Mammary epithelial cell (primary cell): ENCODE measurements at regions of chr18 and their contacts with region 1.

Region 1: DNA sequence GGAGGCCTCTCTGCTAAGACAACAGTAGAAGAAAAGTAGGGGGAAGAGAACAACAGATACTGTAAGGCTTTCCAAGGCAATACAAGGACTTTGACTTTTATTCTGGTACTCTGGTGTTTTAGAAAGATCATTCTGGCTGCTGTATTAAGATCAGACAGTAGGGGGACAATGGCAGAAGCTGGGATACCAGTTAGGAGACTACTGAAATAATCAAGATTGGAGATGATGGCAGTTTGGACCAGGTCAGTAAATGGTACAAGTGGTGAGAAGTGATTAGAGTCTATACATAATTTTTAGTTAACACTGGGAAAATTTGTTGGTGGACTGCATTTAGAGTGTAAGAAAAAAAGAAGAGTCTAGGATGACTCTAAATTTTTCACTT is 139.7 kb downstream of the ROCK1 start:
- DNase-seq: peak; percentile 17
- H3K4me3 ChIP-seq: no peak overlapping the region
- H3K27ac ChIP-seq: no peak overlapping the region
- H3K4me1 ChIP-seq: no peaks in the 10 kb centered on the region
- H3K27me3 ChIP-seq: no peaks in the 10 kb centered on the region
- CTCF ChIP-seq: peak; percentile 57 to 60

Region 2: GRCh38 chr18:21134898-21135297 is 163.0 kb after region 1 on chr18:
- CTCF ChIA-PET with region 1: no interaction called
- dilution Hi-C with region 1: no loop called
- in situ Hi-C with region 1: no loop called
- intact Hi-C with region 1: loop called (anchors 1 kb)
- DNase-seq: peak; percentile 20
- H3K4me3 ChIP-seq: no peak overlapping the region
- H3K27ac ChIP-seq: no peak overlapping the region
- H3K4me1 ChIP-seq: no peaks in the 10 kb centered on the region
- H3K27me3 ChIP-seq: no peaks in the 10 kb centered on the region
- CTCF ChIP-seq: peak; percentile 13 to 47

Region 3: DNA sequence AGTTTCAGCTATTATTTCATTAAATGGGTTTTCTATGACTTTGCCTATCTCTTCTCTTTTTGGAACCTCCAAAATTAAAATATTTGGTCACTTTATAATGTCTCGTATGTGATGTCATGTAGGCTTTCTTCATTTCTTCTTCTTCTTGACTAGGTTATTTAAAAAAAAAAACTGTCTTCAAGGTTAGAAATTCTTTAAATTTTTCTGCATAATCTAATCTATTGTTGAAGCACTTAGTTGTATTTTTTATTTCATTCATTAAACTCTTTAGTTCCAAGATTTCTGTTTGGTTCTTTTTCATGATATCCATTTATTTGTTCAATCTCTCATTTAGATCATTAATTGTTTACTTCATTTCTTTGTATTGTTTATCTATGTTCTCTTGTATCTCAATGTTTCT is 183.6 kb after region 1 on chr18:
- CTCF ChIA-PET with region 1: no interaction called
- dilution Hi-C with region 1: no loop called
- in situ Hi-C with region 1: loop called in 1 of 2 experiments (anchors 10 kb)
- intact Hi-C with region 1: no loop called
- DNase-seq: no peak
- H3K4me3 ChIP-seq: no peak overlapping the region
- H3K27ac ChIP-seq: no peak overlapping the region
- H3K4me1 ChIP-seq: no peaks in the 10 kb centered on the region
- H3K27me3 ChIP-seq: no peaks in the 10 kb centered on the region
- CTCF ChIP-seq: no peak

Region 4: GRCh38 chr18:21203096-21203495 is 231.2 kb after region 1 on chr18:
- CTCF ChIA-PET with region 1: no interaction called
- dilution Hi-C with region 1: no loop called
- in situ Hi-C with region 1: no loop called
- intact Hi-C with region 1: no loop called
- DNase-seq: peak; percentile 9
- H3K4me3 ChIP-seq: no peak overlapping the region
- H3K27ac ChIP-seq: no peak overlapping the region
- H3K4me1 ChIP-seq: no peaks in the 10 kb centered on the region
- H3K27me3 ChIP-seq: peaks cover 2% of the 10 kb centered on the region
- CTCF ChIP-seq: no peak